Activated CD8-positive, alpha-beta memory T cell treated with anti-CD3 and anti-CD28 coated beads, Interleukin-2, amount 10 ng/mL, durations not matched to agents 7 days and 5 days (primary cell): ENCODE measurements at regions of chr16 and their contacts with region 1.

Region 1: GRCh38 chr16:57000271-57001025 is 11.1 kb downstream of the NLRC5 start:
- DNase-seq: peak; percentile 80
- ATAC-seq: peak; percentile 63
- H3K4me3 Mint-ChIP-seq: peak overlapping the region; percentile 51
- H3K27ac Mint-ChIP-seq: peak overlapping the region; percentile 95
- H3K4me1 Mint-ChIP-seq: peaks cover 91% of the 10 kb centered on the region
- H3K27me3 Mint-ChIP-seq: no peaks in the 10 kb centered on the region

Region 2: DNA sequence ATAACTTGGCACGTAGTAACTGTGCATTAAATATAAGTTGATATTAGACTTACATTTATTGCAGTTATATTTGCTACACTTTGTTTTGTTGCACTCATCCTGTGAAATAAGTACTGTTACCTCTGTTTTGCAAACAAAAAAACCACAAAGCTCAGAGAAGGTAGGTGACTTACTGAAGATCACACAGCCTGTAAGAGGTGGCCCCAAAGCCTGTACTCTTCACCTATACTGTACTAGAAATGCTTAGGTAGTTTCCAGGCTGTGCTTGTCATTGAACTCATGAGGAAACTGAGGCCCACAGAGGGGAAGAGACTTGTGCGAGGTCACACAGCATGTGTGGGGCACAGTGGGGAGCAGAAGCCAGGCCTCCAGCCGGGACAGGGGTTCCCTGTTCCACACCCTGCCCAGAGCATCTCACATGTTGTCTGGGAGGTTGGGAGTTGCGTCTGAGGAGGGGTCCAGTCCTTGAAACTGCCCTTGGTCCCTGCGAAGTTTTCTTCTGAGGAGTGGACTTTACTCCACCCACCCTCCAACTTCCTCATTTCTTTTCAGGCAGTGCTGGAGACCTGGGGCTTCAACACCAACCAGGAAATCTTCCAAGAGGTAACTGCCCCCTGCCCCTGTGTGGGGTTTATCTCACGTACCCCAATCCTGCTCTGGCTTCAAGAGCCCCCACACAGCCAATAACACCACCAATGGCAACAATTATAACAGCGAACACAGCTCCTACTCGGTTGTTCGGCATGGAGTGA is 25.7 kb before region 1 on chr16:
- CTCF ChIA-PET with region 1: no interaction called
- DNase-seq: no peak
- ATAC-seq: no peak
- H3K4me3 Mint-ChIP-seq: no peak overlapping the region
- H3K27ac Mint-ChIP-seq: no peak overlapping the region
- H3K4me1 Mint-ChIP-seq: peaks cover 11% of the 10 kb centered on the region
- H3K27me3 Mint-ChIP-seq: no peaks in the 10 kb centered on the region

Region 3: DNA sequence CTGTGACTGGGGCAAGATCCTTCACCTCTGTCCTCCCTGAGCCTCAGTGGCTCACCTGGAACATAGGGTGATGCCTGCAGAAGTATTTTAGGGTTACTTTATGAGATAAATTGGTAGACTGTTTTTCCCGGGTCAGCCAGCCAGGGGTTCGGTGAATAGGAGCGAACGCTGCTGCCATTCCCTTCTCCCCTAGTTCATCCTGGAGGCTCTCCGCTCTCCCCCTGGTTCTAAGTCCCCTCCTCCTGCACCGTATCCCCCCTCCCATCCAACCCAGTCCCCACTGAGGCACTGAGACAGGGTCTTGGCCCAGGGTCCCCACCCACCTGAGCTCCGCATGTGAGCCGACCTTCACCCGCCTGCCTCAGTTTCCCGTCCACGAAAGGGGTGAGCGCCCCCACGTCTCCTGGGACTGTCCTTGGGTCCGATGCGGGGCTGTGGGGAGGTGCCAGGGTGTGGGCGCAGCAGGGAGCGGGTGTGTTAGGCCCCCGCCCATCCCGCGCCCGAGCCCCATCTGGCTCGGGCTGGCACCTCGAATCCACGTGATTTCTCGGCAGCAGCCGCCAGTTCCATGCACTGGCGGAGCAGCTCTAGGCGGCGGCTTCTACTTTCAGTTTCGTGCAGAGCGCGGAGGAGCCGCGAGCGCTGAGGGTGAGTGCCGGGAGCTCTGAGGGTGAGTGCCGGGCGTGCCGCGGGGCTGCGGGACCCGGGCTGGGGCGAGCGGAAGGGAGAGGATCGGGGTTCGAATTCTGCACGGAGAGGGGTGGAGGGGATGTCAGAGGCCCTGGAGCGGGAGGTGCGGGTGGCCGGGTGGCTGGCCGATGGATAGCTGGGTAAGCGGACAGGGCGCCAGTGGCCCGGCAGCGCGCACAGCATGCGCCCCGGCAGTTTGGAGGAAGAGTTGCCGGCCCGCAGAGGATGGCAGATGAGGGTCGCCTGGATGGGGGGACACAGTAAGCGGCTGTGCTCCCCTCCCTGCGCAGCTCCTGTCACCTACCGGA is 11.2 kb before region 1 on chr16 and contains the start of gene NLRC5:
- CTCF ChIA-PET with region 1: interaction called, 13 read pairs
- DNase-seq: peak; percentile 95
- ATAC-seq: peak; percentile 88
- H3K4me3 Mint-ChIP-seq: peak within 1 kb of the TSS; percentile 99
- H3K27ac Mint-ChIP-seq: peak within 1 kb of the TSS; percentile 99
- H3K4me1 Mint-ChIP-seq: peaks cover 60% of the 10 kb centered on the region
- H3K27me3 Mint-ChIP-seq: no peaks in the 10 kb centered on the region
- total RNA-seq, gene NLRC5: 156 to 287 TPM

Region 4: GRCh38 chr16:57062329-57062728 is 61.9 kb after region 1 on chr16:
- CTCF ChIA-PET with region 1: no interaction called
- DNase-seq: no peak
- ATAC-seq: no peak
- H3K4me3 Mint-ChIP-seq: no peak overlapping the region
- H3K27ac Mint-ChIP-seq: no peak overlapping the region
- H3K4me1 Mint-ChIP-seq: no peaks in the 10 kb centered on the region
- H3K27me3 Mint-ChIP-seq: no peaks in the 10 kb centered on the region